ENCODE measurements at regions of chr2 and their contacts with region 1.

Region 1: GRCh38 chr2:11344342-11344955 is at the start of gene ROCK2:
- DNase-seq: peak; percentile 82
- H3K4me3 ChIP-seq: peak within 1 kb of the TSS; percentile 79 to 94 (median 92)
- H3K27ac ChIP-seq: peak within 1 kb of the TSS; percentile 98
- H3K4me1 ChIP-seq: peaks cover 25% of the 10 kb centered on the region
- H3K27me3 ChIP-seq: no peaks in the 10 kb centered on the region
- CTCF ChIP-seq: no peak
- POLR2A ChIP-seq: peak; percentile 73
- total RNA-seq, gene ROCK2: 54.3 and 56.5 TPM in 2 replicates

Region 2: GRCh38 chr2:10812362-10813162 is 531.9 kb before region 1 on chr2 and contains the start of gene PDIA6:
- CTCF ChIA-PET with region 1: no interaction called
- POLR2A ChIA-PET with region 1: no interaction called
- dilution Hi-C with region 1: no loop called
- intact Hi-C with region 1: loop called (anchors 5 kb)
- DNase-seq: peak; percentile 98
- H3K4me3 ChIP-seq: peak within 1 kb of the TSS; percentile 53 to 95 (median 67)
- H3K27ac ChIP-seq: peak within 1 kb of the TSS; percentile 64
- H3K4me1 ChIP-seq: peaks cover 27% of the 10 kb centered on the region
- H3K27me3 ChIP-seq: peaks cover 0 to 2% of the 10 kb centered on the region in 2 experiments
- CTCF ChIP-seq: no peak
- POLR2A ChIP-seq: peak; percentile 72
- total RNA-seq, gene PDIA6: 424 and 433 TPM in 2 replicates

Region 3: GRCh38 chr2:11234309-11234708 is 110.1 kb before region 1 on chr2:
- CTCF ChIA-PET with region 1: interaction called, 51 read pairs
- POLR2A ChIA-PET with region 1: interaction called, 3 read pairs
- dilution Hi-C with region 1: no loop called
- intact Hi-C with region 1: loop called (anchors 1 kb)
- DNase-seq: peak; percentile 46
- H3K4me3 ChIP-seq: no peak overlapping the region
- H3K27ac ChIP-seq: no peak overlapping the region
- H3K4me1 ChIP-seq: no peaks in the 10 kb centered on the region
- H3K27me3 ChIP-seq: no peaks in the 10 kb centered on the region
- CTCF ChIP-seq: peak; percentile 17 to 21
- POLR2A ChIP-seq: no peak

Region 4: GRCh38 chr2:11254100-11254536 is 90.3 kb before region 1 on chr2:
- CTCF ChIA-PET with region 1: no interaction called
- POLR2A ChIA-PET with region 1: no interaction called
- dilution Hi-C with region 1: no loop called
- intact Hi-C with region 1: no loop called
- DNase-seq: no peak
- H3K4me3 ChIP-seq: no peak overlapping the region
- H3K27ac ChIP-seq: no peak overlapping the region
- H3K4me1 ChIP-seq: peaks cover 8% of the 10 kb centered on the region
- H3K27me3 ChIP-seq: no peaks in the 10 kb centered on the region
- CTCF ChIP-seq: no peak
- POLR2A ChIP-seq: no peak

Region 5: DNA sequence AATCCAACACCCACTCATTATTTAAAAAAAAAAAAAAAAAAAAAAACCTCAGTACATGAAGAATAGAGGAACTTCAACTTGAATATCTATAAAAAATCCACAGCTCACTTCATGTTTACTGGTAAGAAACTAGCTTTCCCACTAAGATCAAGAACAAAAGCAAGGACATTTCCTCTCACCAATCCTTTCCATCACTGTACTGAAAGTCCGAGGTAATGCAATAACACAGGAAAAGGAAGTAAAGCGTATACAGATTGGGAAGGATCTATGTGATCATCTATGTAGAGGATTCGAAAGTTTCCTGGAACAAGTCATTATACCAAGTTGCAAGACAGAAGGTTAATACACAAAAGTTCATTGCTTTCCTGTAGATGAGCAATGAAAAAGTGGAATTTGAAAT is 63.3 kb before region 1 on chr2:
- CTCF ChIA-PET with region 1: no interaction called
- POLR2A ChIA-PET with region 1: no interaction called
- dilution Hi-C with region 1: no loop called
- intact Hi-C with region 1: loop called (anchors 1 kb)
- DNase-seq: peak; percentile 71
- H3K4me3 ChIP-seq: peak overlapping the region in 1 of 3 experiments; percentile 40
- H3K27ac ChIP-seq: peak overlapping the region; percentile 5
- H3K4me1 ChIP-seq: peaks cover 12% of the 10 kb centered on the region
- H3K27me3 ChIP-seq: no peaks in the 10 kb centered on the region
- CTCF ChIP-seq: no peak
- POLR2A ChIP-seq: no peak

Region 6: DNA sequence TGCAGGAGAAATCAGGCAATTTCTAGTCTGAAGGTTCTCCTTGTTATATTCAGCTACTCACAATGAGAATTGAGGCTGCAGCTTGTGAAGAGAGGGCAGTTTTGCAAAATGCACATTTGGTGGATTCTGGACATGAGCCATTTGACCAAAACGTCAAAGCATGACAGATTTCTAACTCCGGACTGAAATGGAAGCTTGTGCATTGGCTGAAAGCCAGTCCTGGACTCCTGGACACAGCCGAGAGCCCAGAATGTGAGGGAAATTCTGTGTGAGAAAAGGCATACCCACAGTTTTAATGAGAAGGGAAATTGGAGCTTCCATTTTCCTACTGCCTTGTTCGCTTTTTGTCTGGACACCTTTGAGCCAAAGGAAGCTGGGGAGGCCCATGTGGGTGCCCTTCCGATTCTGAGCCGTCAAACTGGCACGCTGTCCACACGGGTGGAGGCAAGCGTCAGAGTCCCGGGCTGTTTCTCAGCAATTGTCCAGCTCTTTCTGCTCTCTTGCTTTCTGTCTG is 23.7 kb after region 1 on chr2:
- CTCF ChIA-PET with region 1: interaction called, 11 read pairs
- POLR2A ChIA-PET with region 1: interaction called, 8 read pairs
- dilution Hi-C with region 1: no loop called
- intact Hi-C with region 1: no loop called
- DNase-seq: peak; percentile 65
- H3K4me3 ChIP-seq: peak overlapping the region in 1 of 3 experiments; percentile 32
- H3K27ac ChIP-seq: peak overlapping the region; percentile 16
- H3K4me1 ChIP-seq: peaks cover 16% of the 10 kb centered on the region
- H3K27me3 ChIP-seq: no peaks in the 10 kb centered on the region
- CTCF ChIP-seq: no peak
- POLR2A ChIP-seq: no peak

Region 7: GRCh38 chr2:11387854-11388692 is 43.6 kb after region 1 on chr2:
- CTCF ChIA-PET with region 1: interaction called, 3 read pairs
- POLR2A ChIA-PET with region 1: no interaction called
- dilution Hi-C with region 1: no loop called
- intact Hi-C with region 1: loop called (anchors 1 kb)
- DNase-seq: no peak
- H3K4me3 ChIP-seq: no peak overlapping the region
- H3K27ac ChIP-seq: no peak overlapping the region
- H3K4me1 ChIP-seq: peaks cover 20% of the 10 kb centered on the region
- H3K27me3 ChIP-seq: no peaks in the 10 kb centered on the region
- CTCF ChIP-seq: no peak
- POLR2A ChIP-seq: no peak

Measured in endothelial cell of umbilical vein (primary cell).